ENCODE measurements at regions of chr1 and their contacts with region 1.

Region 1: DNA sequence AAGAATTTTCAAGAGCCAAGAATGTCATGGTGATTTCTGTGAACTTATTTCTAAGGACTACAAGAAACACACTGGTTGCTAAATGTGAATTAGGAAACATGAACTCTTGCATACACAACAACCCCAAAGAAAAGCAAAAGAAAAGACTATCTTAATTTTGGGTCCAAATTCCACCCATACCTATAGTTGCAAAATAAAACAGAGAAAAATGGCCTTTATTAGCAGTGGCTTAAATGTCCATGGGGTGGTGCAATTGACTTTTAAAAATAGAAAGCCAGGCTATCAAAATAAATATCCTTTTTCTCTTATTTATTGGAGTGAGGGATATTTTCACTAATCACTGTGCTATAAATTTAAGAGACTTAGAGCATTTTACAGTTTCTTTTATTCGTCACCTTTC is 80.9 kb upstream of the DPYD start:
- DNase-seq: no peak
- H3K4me3 Mint-ChIP-seq: no peak overlapping the region
- H3K27ac Mint-ChIP-seq: no peak overlapping the region
- H3K4me1 Mint-ChIP-seq: peaks cover 9% of the 10 kb centered on the region
- H3K27me3 Mint-ChIP-seq: no peaks in the 10 kb centered on the region
- CTCF ChIP-seq: no peak

Region 2: DNA sequence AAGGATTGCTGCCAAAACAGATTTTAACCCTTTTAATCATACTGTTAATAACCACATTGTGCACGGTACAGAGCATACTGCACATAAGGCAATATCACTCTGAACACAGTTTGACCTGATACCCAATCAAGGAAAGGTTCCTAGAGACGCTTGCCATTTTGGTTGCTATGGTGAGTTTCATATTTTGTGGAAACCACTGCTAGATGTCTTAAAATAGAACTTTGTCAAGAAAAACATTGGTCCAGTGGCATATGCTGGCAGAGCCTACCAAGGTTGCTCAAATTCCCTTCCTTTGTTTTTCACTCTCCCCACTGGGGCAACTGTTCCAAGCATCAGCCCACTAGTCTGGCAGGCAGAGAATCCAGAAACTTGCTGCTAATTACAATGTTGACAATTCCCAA is 33.8 kb after region 1 on chr1:
- CTCF ChIA-PET with region 1: no interaction called
- intact Hi-C with region 1: loop called (anchors 5 kb)
- DNase-seq: no peak
- H3K4me3 Mint-ChIP-seq: no peak overlapping the region
- H3K27ac Mint-ChIP-seq: no peak overlapping the region
- H3K4me1 Mint-ChIP-seq: peaks cover 17% of the 10 kb centered on the region
- H3K27me3 Mint-ChIP-seq: no peaks in the 10 kb centered on the region
- CTCF ChIP-seq: no peak

Measured in Calu3 (cell line).